ENCODE measurements at regions of chr1 and their contacts with region 1.

Region 1: GRCh38 chr1:59892841-59893811 is 33.4 kb downstream of the CYP2J2 start:
- DNase-seq: no peak
- ATAC-seq: no peak
- H3K4me3 ChIP-seq: no peak overlapping the region
- H3K27ac ChIP-seq: no peak overlapping the region
- H3K4me1 ChIP-seq: peaks cover 0 to 14% (median 0%) of the 10 kb centered on the region in 12 donors
- H3K27me3 ChIP-seq: no peaks in the 10 kb centered on the region
- CTCF ChIP-seq: no peak
- POLR2A ChIP-seq: no peak

Region 2: DNA sequence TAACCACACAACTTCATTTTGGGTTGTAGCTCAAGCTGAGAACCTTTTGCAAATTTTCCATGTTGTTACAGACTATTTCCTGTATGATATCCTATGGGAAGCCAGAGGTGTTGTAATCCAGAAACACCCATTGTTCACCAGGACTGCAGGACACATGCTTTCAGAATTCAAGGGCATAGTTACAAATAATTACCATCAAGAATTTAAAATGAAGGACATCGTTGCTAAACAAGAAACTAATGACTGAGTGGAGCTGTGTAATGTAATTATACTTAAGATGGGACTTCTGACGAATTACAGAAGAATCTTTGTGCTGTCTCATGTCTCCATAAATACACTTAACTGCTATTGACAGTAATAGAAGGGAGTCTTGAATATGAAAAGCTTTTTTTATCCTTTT is 126.0 kb before region 1 on chr1:
- intact Hi-C with region 1: no loop called
- DNase-seq: no peak
- ATAC-seq: no peak
- H3K4me3 ChIP-seq: no peak overlapping the region
- H3K27ac ChIP-seq: no peak overlapping the region
- H3K4me1 ChIP-seq: peaks cover 0 to 3% (median 0%) of the 10 kb centered on the region in 12 donors
- H3K27me3 ChIP-seq: no peaks in the 10 kb centered on the region
- CTCF ChIP-seq: no peak
- POLR2A ChIP-seq: no peak

Region 3: DNA sequence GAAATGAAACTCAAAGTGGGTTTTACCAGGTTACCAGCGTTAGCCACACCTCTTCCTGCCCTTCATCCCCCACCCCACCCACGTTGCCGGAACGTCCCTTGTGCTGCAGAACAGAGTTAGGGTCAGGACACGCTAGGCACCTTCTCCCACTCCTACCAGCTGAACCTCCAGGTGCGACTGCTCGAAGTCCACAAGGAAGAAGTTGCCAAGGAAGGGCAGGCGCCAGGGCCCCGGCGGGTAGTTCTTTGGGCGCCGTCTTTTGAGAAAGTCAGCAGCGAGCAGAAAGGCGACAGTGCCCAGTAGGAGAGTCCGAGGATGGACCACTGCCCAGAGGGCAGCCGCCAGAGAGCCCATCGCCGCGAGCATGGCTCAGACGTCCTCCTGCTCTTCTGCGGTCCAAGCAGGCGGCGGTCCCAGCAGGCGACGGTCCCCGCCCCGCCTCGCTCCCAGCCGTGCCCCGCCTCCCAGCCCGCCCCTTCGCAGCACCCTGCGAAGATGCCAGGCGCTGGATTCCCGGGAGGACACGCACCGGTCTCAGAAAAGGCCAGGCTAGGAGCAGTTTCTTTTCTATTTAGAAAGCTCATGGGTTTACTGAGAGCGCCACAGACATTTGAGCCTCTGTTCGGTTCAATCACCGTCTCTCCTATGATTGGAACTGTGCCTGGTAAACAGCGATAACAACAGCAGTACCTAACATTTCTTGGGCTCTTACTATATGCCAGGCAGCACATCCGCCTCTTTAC is 33.4 kb after region 1 on chr1 and contains the start of gene CYP2J2:
- intact Hi-C with region 1: loop called in 1 of 10 experiments (anchors 5 kb)
- DNase-seq: peak; percentile 72 to 86 (median 79)
- ATAC-seq: peak; percentile 91 to 99 (median 98)
- H3K4me3 ChIP-seq: peak within 1 kb of the TSS; percentile 38 to 77 (median 59)
- H3K27ac ChIP-seq: peak within 1 kb of the TSS; percentile 34 to 97 (median 81)
- H3K4me1 ChIP-seq: peaks cover 0 to 11% (median 0%) of the 10 kb centered on the region in 12 donors
- H3K27me3 ChIP-seq: peaks cover 0 to 39% (median 6%) of the 10 kb centered on the region in 9 donors
- CTCF ChIP-seq: no peak
- POLR2A ChIP-seq: peak in 1 of 2 donors; percentile 55
- total RNA-seq, gene CYP2J2: 57.1 to 208 (median 101) TPM